Activated naive CD4-positive, alpha-beta T cell treated with anti-CD3 and anti-CD28 coated beads, Interleukin-2, amount 10 ng/mL, durations not matched to agents 7 days and 5 days (primary cell): ENCODE measurements at regions of chr3 and their contacts with region 1.

Region 1: DNA sequence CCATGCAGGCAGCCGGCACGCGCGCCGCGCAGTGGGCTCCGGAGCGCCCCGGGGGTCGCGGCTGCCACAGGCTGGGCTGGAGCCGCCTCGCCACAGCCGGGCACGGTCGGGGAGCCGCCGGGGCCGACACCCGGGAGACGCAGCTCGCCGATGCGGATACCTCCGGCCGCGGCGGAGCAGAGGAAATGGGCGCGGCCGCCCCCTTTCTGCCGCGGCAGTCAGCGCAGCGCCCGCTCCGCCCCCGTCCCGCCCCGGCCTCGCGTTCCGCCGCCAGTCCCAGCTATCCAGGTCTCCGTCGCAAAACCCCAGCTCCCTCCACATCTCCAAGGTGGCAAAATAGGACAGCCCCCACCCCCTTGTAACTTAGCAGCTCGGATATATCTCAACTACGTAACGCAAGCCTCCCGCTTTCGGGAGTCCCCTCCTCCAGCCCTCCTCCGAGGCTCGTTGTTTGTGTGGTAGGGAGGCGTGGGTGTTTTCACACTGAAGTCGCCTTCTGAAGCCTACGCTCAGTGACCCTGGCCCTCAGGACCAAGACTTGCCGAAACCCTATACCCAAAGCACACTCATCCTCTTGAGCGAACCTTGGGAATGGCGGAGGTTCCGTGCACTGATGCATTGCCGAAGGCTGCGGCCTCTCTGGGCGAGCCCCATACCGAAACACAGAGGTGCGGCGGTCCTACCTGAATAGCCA is at the start of gene SH3BP5:
- DNase-seq: peak; percentile 83
- H3K4me3 Mint-ChIP-seq: peak within 1 kb of the TSS; percentile 86
- H3K27ac Mint-ChIP-seq: peak within 1 kb of the TSS; percentile 84
- H3K4me1 Mint-ChIP-seq: peaks cover 59% of the 10 kb centered on the region
- H3K27me3 Mint-ChIP-seq: peaks cover 9% of the 10 kb centered on the region

Region 2: GRCh38 chr3:14871481-14872200 is 460.9 kb before region 1 on chr3:
- CTCF ChIA-PET with region 1: no interaction called
- DNase-seq: no peak
- H3K4me3 Mint-ChIP-seq: no peak overlapping the region
- H3K27ac Mint-ChIP-seq: no peak overlapping the region
- H3K4me1 Mint-ChIP-seq: peaks cover 11% of the 10 kb centered on the region
- H3K27me3 Mint-ChIP-seq: peaks cover 52% of the 10 kb centered on the region

Region 3: GRCh38 chr3:15319575-15319974 is 13.0 kb before region 1 on chr3:
- CTCF ChIA-PET with region 1: interaction called, 10 read pairs
- DNase-seq: no peak
- H3K4me3 Mint-ChIP-seq: no peak overlapping the region
- H3K27ac Mint-ChIP-seq: no peak overlapping the region
- H3K4me1 Mint-ChIP-seq: peaks cover 63% of the 10 kb centered on the region
- H3K27me3 Mint-ChIP-seq: no peaks in the 10 kb centered on the region

Region 4: DNA sequence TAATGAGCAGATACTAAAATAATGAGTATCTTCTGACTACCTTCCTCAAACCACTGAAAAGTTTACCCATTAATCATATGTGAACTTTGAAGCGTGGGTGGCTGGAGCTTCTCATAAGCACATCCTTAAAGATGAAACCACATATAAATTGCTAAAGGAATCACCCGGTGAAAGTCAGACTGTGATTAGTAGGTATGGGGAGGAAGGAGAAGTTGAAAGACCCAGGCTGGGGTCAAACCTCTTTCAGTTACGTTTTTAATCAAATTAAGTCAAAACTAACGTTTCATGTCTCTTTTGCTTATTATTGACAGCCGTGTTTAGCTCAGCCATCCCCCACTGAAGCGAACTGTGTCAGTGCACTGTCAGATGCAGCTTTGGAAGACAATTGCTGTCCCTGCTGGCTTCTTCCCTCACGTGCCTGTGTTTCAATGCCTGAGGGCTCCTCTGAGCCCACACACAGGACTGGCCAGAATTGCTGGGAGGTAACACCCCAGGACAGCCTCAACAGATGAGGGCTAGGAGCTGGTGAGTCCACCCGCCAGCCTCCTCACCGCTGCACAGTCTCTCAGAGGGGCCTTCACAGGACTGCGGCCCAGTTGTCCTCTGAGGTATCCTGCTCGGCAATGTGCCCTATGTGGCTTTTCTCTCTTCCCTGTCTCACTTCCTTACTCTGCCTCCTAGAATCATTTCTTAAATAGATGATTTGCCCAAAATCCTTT is 29.1 kb after region 1 on chr3:
- CTCF ChIA-PET with region 1: interaction called, 16 read pairs
- DNase-seq: peak; percentile 46
- H3K4me3 Mint-ChIP-seq: no peak overlapping the region
- H3K27ac Mint-ChIP-seq: peak overlapping the region; percentile 82
- H3K4me1 Mint-ChIP-seq: peaks cover 54% of the 10 kb centered on the region
- H3K27me3 Mint-ChIP-seq: no peaks in the 10 kb centered on the region